ENCODE measurements at regions of chr10 and their contacts with region 1.

Region 1: DNA sequence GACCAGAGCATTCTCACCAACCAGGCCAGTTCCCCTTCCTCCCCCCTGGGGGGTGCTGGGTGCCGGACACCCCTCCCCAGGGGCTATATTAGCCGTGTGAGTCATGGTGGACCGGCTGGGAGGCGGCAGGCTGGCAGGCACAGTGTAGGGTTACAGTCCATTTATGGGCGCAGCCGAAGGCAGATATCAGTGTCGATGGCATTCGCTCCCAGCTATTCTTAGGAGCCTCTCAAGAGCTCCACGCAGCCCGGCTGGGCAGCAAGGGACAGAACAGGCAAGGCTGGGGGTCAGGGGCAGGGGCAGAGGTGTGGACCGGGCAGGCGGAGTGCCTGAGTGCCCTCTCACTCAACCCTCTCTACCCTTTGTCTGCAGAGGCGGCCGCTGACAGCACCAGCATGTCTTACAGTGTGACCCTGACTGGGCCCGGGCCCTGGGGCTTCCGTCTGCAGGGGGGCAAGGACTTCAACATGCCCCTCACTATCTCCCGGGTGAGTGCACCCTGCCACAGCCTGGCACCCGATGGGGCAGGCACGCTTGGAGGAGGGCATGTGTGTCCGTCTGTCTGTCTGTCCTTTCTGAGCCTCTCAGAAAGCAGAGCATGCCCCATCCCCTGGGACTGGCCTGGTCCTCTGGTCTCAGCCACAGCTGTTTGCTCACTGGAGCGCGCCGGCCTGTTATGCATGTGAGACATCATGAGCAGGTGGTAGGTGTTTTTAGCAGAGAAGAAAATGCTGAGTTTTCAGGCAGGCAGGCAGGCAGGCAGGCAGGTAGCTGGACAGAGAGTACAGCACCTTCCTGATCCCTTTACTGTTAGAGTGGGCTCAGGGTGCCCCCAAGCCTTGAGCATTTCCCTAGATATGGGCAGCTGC is at the start of gene LDB3:
- DNase-seq: peak; percentile 85 to 92
- ATAC-seq: peak; percentile 82
- H3K4me3 ChIP-seq: peak within 1 kb of the TSS; percentile 33 to 35
- H3K27ac ChIP-seq: peak within 1 kb of the TSS; percentile 85 to 93
- H3K4me1 ChIP-seq: peaks cover 3 to 6% of the 10 kb centered on the region in 2 donors
- H3K27me3 ChIP-seq: no peaks in the 10 kb centered on the region
- total RNA-seq, gene LDB3: 67.9 to 132 TPM

Region 2: DNA sequence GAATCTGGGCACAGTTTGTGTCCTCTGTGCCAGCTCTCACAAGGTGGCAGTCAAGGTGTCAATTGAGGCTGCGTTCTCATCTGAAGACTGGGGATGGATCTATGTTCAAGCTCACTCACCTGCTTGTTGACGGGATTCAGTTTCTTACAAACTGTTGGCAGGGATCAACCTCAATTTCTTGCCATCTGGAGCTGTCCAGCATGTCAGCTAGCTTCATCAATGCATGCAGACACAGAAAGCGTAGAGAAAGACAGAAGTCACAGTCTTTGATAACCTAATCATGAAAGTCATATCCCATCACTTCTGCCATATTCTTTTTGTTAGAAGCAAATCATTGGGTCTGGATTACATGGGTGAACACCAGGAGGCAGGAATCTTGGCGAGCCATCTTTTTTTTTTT is 114.9 kb before region 1 on chr10:
- intact Hi-C with region 1: no loop called
- DNase-seq: no peak
- ATAC-seq: no peak
- H3K4me3 ChIP-seq: no peak overlapping the region
- H3K27ac ChIP-seq: no peak overlapping the region
- H3K4me1 ChIP-seq: no peaks in the 10 kb centered on the region
- H3K27me3 ChIP-seq: no peaks in the 10 kb centered on the region

Region 3: GRCh38 chr10:86596266-86596665 is 72.3 kb before region 1 on chr10:
- intact Hi-C with region 1: loop called in 1 of 2 experiments (anchors 2 kb)
- DNase-seq: peak in 1 of 2 donors; percentile 56
- ATAC-seq: peak; percentile 44
- H3K4me3 ChIP-seq: no peak overlapping the region
- H3K27ac ChIP-seq: no peak overlapping the region
- H3K4me1 ChIP-seq: no peaks in the 10 kb centered on the region
- H3K27me3 ChIP-seq: no peaks in the 10 kb centered on the region

Region 4: GRCh38 chr10:86644152-86644793 is 24.3 kb before region 1 on chr10:
- intact Hi-C with region 1: no loop called
- DNase-seq: no peak
- ATAC-seq: no peak
- H3K4me3 ChIP-seq: no peak overlapping the region
- H3K27ac ChIP-seq: no peak overlapping the region
- H3K4me1 ChIP-seq: peaks cover 0 to 2% of the 10 kb centered on the region in 2 donors
- H3K27me3 ChIP-seq: no peaks in the 10 kb centered on the region

Region 5: DNA sequence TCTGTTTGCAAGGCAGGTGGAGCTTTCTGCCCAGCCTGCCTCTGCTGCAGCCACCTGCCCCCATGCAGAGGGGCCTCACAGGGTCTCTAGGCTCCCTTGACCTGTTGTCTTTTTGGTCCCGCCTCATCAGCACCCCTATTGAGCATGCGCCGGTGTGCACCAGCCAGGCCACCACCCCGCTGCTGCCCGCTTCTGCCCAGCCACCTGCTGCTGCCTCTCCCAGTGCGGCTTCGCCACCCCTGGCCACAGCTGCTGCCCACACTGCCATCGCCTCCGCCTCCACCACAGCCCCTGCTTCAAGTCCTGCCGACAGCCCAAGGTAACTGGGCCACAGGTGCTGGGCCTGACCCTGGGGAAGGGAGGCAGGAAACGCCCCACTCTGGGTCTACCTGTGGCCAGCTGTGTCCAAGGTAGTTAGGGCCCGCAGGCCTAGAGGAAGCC is 37.9 kb after region 1 on chr10:
- intact Hi-C with region 1: no loop called
- DNase-seq: peak; percentile 33 to 72
- ATAC-seq: no peak
- H3K4me3 ChIP-seq: no peak overlapping the region
- H3K27ac ChIP-seq: no peak overlapping the region
- H3K4me1 ChIP-seq: no peaks in the 10 kb centered on the region
- H3K27me3 ChIP-seq: no peaks in the 10 kb centered on the region

Region 6: DNA sequence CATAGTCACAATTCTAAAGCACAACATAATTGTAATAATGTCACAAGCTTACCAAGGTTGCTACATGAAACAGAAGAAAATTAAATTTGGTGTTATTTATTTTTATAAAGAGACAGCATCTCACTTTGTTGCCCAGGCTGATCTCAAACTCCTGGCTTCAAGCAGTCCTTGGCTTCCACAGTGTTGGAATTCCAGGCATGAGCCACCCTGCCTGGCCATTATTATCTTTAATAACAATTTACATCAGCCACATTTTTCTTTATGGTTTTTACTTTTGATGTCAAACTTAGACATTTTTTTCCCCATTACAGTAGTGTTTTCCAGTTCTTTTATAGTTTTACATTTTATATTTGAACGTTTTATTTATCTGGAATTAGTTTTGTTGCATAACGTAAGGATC is 134.6 kb after region 1 on chr10:
- intact Hi-C with region 1: no loop called
- DNase-seq: no peak
- ATAC-seq: no peak
- H3K4me3 ChIP-seq: no peak overlapping the region
- H3K27ac ChIP-seq: no peak overlapping the region
- H3K4me1 ChIP-seq: peaks cover 2 to 7% of the 10 kb centered on the region in 2 donors
- H3K27me3 ChIP-seq: no peaks in the 10 kb centered on the region